ENCODE measurements at regions of chr12 and their contacts with region 1.

Region 1: DNA sequence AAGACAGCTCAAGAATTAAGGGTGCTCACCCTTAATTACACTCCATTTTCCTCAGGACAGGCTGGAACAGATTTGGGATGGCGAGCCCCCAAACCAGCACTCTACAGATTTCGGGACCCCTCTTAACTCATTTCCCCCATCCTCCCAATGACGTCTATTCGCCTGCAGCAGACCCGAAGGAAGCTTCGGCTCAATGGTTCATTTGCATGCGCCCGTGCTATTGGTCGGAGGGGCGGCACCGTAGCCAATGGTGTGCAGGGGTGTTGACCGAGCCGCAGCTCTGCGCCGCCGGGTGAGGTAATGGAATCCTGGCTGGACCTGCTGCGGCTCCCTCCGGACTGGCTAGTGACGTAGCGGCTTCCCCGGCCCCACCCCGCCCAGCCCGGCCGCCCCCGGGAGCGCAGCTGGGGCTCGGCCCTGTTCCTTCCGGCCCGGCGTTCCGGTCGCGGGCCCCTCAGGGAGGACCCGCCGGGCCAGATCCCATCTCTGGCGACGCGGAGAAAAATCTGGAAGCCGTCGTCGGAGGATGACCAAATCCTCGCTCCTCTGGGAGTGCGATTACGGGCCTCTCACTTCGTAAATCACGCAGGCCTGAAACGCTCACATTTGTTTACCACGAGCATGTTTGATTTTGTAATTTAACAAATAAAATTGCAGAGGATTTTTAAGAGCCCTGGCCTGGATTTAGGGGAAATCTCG is 18.3 kb upstream of the NR4A1 start:
- DNase-seq: peak; percentile 98 to 99 (median 99)
- H3K4me3 ChIP-seq: peak overlapping the region in 2 of 4 donors; percentile 14 to 31
- H3K27ac ChIP-seq: peak overlapping the region; percentile 74 to 95 (median 91)
- H3K4me1 ChIP-seq: peaks cover 18 to 30% of the 10 kb centered on the region in 2 donors
- H3K27me3 ChIP-seq: no peaks in the 10 kb centered on the region
- CTCF ChIP-seq: no peak
- POLR2A ChIP-seq: peak; percentile 79 to 83

Region 2: DNA sequence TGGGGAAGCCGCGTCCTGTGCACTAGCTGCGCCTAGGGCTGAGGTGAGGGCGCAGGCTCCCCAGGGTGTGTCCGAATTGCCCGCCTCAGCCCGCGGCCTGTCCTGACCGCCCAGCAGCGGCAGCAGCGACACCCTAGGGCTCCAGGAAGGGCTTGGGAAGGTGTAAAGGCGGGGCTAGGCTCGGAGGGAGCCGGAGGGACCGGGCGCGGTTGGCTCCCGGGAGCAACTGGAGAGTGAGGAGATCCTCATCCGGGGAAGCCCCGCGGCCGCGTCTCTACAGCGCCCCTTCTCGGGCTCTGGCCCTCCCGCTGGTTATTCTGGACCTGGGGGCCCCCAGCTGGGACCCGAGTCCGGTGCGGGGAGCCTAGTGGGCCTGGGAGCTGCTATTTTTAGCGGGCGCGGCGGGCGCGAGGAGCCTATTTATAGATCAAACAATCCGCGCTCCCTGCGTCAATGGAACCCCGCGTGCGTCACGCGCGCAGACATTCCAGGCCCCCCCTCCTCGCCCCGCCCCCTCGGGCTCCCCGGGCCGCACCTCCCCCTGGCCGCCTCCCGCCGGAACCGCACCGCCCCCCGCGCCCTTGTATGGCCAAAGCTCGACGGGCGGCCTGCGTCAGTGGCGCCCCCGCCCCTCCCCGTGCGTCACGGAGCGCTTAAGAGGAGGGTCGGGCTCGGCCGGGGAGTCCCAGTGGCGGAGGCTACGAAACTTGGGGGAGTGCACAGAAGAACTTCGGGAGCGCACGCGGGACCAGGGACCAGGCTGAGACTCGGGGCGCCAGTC is 18.0 kb after region 1 on chr12 and contains the start of gene NR4A1:
- intact Hi-C with region 1: loop called in 1 of 2 experiments (anchors 2 kb)
- DNase-seq: peak; percentile 98 to 100 (median 99)
- H3K4me3 ChIP-seq: peak within 1 kb of the TSS; percentile 7 to 62 (median 40)
- H3K27ac ChIP-seq: peak within 1 kb of the TSS; percentile 72 to 98 (median 96)
- H3K4me1 ChIP-seq: peaks cover 13 to 32% of the 10 kb centered on the region in 2 donors
- H3K27me3 ChIP-seq: no peaks in the 10 kb centered on the region
- CTCF ChIP-seq: peak in 1 of 6 experiments; percentile 10
- POLR2A ChIP-seq: peak; percentile 96 to 98
- total RNA-seq, gene NR4A1: 19.0 to 854 (median 108) TPM

Region 3: GRCh38 chr12:52082988-52083637 is 50.2 kb after region 1 on chr12:
- intact Hi-C with region 1: loop called (anchors 5 kb)
- DNase-seq: peak in 5 of 7 donors; percentile 43 to 78 (median 56)
- H3K4me3 ChIP-seq: no peak overlapping the region
- H3K27ac ChIP-seq: peak overlapping the region in 3 of 5 donors; percentile 24 to 83 (median 65)
- H3K4me1 ChIP-seq: peaks cover 3 to 12% of the 10 kb centered on the region in 2 donors
- H3K27me3 ChIP-seq: no peaks in the 10 kb centered on the region
- CTCF ChIP-seq: peak; percentile 90 to 98 (median 96)
- POLR2A ChIP-seq: no peak

Region 4: GRCh38 chr12:52307836-52308805 is 275.2 kb after region 1 on chr12:
- intact Hi-C with region 1: no loop called
- DNase-seq: peak in 4 of 7 donors; percentile 15 to 69 (median 28)
- H3K4me3 ChIP-seq: no peak overlapping the region
- H3K27ac ChIP-seq: no peak overlapping the region
- H3K4me1 ChIP-seq: no peaks in the 10 kb centered on the region
- H3K27me3 ChIP-seq: peaks cover 21% of the 10 kb centered on the region
- CTCF ChIP-seq: peak in 1 of 6 experiments; percentile 14
- POLR2A ChIP-seq: no peak

Measured in adrenal gland (tissue), 19 donors.